SK-N-SH (cell line): ENCODE measurements at regions of chr17 and their contacts with region 1.

Region 1: GRCh38 chr17:45197555-45198334 is 23.9 kb upstream of the FMNL1 start:
- DNase-seq: peak; percentile 93
- H3K4me3 ChIP-seq: peak overlapping the region in 1 of 2 experiments; percentile 54; a peak in 1 of 4 replicates
- H3K27ac ChIP-seq: peak overlapping the region; percentile 41 to 46; a peak in 3 of 4 replicates
- H3K4me1 ChIP-seq: peaks cover 5 to 8% of the 10 kb centered on the region in 2 experiments; a peak in 3 of 4 replicates
- H3K27me3 ChIP-seq: no peaks in the 10 kb centered on the region
- CTCF ChIP-seq: peak; percentile 98
- EP300 ChIP-seq: no peak
- RAD21 ChIP-seq: peak; percentile 95

Region 2: GRCh38 chr17:45148183-45149036 is 49.3 kb before region 1 on chr17 and contains the start of gene HEXIM1:
- CTCF ChIA-PET with region 1: interaction called, 141 read pairs
- POLR2A ChIA-PET with region 1: interaction called, 60 read pairs
- DNase-seq: peak; percentile 94
- H3K4me3 ChIP-seq: peak within 1 kb of the TSS; percentile 85 to 99
- H3K27ac ChIP-seq: peak within 1 kb of the TSS; percentile 99 to 100
- H3K4me1 ChIP-seq: peaks cover 17 to 25% of the 10 kb centered on the region in 2 experiments; a peak in 3 of 4 replicates
- H3K27me3 ChIP-seq: no peaks in the 10 kb centered on the region
- CTCF ChIP-seq: no peak
- EP300 ChIP-seq: no peak; a peak in 1 of 4 replicates
- RAD21 ChIP-seq: no peak
- polyA plus RNA-seq, gene HEXIM1: 16.1 and 20.7 TPM in 2 replicates

Region 3: GRCh38 chr17:45155029-45155428 is 42.7 kb before region 1 on chr17:
- CTCF ChIA-PET with region 1: interaction called, 141 read pairs
- POLR2A ChIA-PET with region 1: interaction called, 60 read pairs
- DNase-seq: no peak
- H3K4me3 ChIP-seq: no peak overlapping the region
- H3K27ac ChIP-seq: peak overlapping the region in 1 of 2 experiments; percentile 11; a peak in 1 of 4 replicates
- H3K4me1 ChIP-seq: peaks cover 15 to 22% of the 10 kb centered on the region in 2 experiments; a peak in 3 of 4 replicates
- H3K27me3 ChIP-seq: no peaks in the 10 kb centered on the region
- CTCF ChIP-seq: no peak
- EP300 ChIP-seq: no peak
- RAD21 ChIP-seq: no peak

Region 4: GRCh38 chr17:45161019-45161825 is 36.5 kb before region 1 on chr17:
- CTCF ChIA-PET with region 1: interaction called, 40 read pairs
- POLR2A ChIA-PET with region 1: interaction called, 14 read pairs
- DNase-seq: peak; percentile 96
- H3K4me3 ChIP-seq: peak overlapping the region; percentile 74 to 91
- H3K27ac ChIP-seq: peak overlapping the region; percentile 90 to 94
- H3K4me1 ChIP-seq: peaks cover 6 to 18% of the 10 kb centered on the region in 2 experiments; a peak in 2 of 4 replicates
- H3K27me3 ChIP-seq: no peaks in the 10 kb centered on the region
- CTCF ChIP-seq: peak; percentile 34
- EP300 ChIP-seq: peak in 1 of 2 experiments; percentile 55; a peak in 1 of 4 replicates
- RAD21 ChIP-seq: no peak

Region 5: DNA sequence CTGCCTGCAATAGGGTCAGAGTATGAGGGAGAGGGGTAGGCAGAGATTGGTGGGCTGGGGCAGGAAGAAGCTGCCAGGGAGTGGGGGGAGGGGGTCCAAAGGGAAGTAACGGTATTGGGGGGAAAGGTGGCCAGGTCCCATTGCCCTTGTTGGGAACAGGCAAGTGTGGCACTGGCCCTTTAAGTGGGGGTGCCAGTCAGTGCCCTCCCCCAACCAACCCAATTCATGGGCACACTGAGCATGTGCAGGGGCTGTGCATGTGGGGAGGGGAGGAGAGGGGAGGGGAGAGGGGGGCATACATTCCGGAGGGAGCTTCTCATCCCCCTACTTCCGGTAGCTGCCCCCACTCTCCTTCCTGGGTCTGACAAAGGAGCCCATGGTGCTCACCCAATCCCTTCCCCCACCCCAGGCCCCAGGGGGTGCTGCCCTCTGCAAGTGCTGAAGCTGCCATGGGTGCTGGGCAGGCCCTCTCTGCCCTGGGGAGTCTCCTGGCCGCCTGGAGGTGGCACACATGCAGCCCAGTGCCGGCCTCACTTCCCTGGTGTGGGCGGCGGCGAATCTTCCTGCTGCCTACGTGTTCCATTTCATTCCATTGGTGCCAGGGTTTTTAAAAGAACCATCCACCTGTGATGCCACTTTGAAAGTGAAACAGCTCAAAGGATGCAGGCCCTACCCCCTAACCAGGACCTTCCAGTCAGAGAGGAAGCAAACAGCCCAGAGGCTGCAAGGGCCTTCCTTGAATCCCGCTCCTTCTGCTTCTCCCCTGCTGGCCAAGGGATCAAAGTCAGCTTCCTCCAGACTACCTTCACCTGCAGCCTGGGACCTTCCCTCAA is 25.1 kb before region 1 on chr17:
- CTCF ChIA-PET with region 1: interaction called, 24 read pairs
- POLR2A ChIA-PET with region 1: no interaction called
- DNase-seq: peak; percentile 93
- H3K4me3 ChIP-seq: peak overlapping the region; percentile 25 to 30; a peak in 3 of 4 replicates
- H3K27ac ChIP-seq: peak overlapping the region; percentile 89 to 94
- H3K4me1 ChIP-seq: peaks cover 29 to 40% of the 10 kb centered on the region in 2 experiments; a peak in 3 of 4 replicates
- H3K27me3 ChIP-seq: no peaks in the 10 kb centered on the region
- CTCF ChIP-seq: peak; percentile 28; the same call in 1 of the 2 replicates
- EP300 ChIP-seq: peak; percentile 34 to 66; a peak in 2 of 4 replicates
- RAD21 ChIP-seq: peak; percentile 6; the same call in 1 of the 2 replicates

Region 6: DNA sequence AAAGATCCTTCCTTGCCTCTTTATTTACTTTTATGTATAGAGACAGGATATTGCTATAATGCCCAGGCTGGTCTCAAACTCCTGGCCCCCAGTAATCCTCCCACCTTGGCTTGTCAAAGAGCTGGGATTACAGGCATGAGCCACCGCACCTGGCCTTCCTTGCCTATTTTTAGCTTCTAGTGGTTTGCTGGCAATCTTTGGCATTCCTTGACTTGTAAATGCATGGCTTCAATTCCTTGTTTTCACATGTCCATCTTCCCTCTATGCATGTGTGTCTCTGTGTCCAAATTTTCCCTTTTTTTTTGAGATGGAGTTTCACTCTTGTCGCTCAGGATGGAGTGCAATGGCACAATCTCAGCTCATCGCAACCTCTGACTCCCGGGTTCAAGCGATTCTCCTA is 13.6 kb before region 1 on chr17:
- CTCF ChIA-PET with region 1: interaction called, 24 read pairs
- POLR2A ChIA-PET with region 1: no interaction called
- DNase-seq: no peak
- H3K4me3 ChIP-seq: no peak overlapping the region
- H3K27ac ChIP-seq: no peak overlapping the region
- H3K4me1 ChIP-seq: no peaks in the 10 kb centered on the region
- H3K27me3 ChIP-seq: no peaks in the 10 kb centered on the region
- CTCF ChIP-seq: no peak
- EP300 ChIP-seq: no peak
- RAD21 ChIP-seq: no peak

Region 7: DNA sequence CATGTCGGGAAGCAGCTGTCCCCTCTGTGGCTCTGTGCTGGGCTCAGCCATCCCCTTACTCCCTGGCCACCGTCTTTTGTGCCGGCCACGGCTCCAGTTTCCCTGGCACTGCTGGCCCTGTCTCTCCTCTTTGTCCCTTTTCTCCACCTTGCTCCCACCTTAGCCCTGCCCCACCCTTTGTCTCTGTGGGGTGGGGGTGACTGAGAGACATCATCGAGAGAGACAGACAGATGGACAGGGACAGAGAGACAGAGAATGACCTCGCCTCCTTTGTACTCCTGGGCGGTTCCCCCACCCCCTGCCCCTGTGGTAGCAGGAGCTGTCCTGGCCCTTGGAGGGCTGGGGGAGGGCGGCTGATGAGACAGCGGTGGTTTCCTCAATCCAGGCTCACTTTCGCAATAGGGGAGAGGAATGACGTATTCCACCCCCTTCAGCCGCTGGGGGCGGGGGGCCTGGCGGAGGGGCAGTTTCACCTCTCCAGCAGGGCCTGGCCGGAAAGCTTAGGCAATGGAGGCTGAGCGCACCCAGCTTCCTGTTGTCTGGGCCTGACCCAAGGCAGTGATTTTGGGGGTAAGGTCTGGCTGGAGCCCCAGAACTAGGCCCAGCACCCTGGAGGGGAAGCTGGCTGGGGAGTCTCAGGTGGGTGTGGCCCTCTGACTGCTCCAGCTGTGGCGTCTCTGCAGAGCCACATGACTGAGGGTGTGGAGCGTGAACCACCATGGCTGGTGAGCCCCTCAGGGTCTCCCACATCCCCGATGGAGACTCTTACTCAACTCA is 31.2 kb after region 1 on chr17:
- CTCF ChIA-PET with region 1: interaction called, 15 read pairs
- POLR2A ChIA-PET with region 1: no interaction called
- DNase-seq: no peak
- H3K4me3 ChIP-seq: no peak overlapping the region
- H3K27ac ChIP-seq: no peak overlapping the region
- H3K4me1 ChIP-seq: peaks cover 4 to 23% of the 10 kb centered on the region in 2 experiments; a peak in 2 of 4 replicates
- H3K27me3 ChIP-seq: no peaks in the 10 kb centered on the region
- CTCF ChIP-seq: no peak
- EP300 ChIP-seq: no peak
- RAD21 ChIP-seq: no peak

Region 8: DNA sequence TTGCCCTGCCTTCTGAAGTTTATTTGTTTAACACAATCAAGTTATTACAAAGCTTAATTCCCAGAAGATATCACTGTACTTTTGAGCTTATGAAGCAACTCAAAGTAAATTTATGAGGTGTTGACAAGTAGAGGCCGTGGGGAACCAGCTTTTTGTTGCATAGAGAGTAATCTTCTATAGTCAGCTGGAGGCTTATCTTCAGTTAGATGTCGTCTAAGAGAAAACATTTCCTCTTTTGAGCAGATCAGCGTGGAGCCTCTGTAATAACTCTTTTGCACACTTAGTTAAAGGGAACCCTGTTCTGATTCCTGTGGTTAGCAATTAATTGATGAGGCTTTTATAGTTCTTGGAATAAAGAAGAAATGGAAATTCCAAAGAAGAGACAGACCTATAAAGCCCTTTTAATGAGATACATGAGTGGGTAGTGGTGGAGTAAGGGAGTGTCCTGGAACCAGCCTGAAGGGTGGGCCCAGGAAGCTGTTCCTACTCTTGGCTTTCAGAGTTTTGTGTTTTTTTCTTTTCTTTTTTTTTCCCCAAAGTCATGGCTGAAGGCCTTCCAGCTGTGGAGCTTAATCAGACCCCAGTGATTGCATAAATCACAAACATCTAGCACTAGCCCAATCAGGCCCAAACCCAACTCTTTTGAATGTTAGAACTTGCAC is 147.9 kb after region 1 on chr17:
- CTCF ChIA-PET with region 1: no interaction called
- POLR2A ChIA-PET with region 1: no interaction called
- DNase-seq: no peak
- H3K4me3 ChIP-seq: no peak overlapping the region
- H3K27ac ChIP-seq: no peak overlapping the region
- H3K4me1 ChIP-seq: peaks cover 6 to 11% of the 10 kb centered on the region in 2 experiments; a peak in 2 of 4 replicates
- H3K27me3 ChIP-seq: no peaks in the 10 kb centered on the region
- CTCF ChIP-seq: no peak
- EP300 ChIP-seq: no peak
- RAD21 ChIP-seq: no peak